ENCODE measurements at regions of chr2 and their contacts with region 1.

Region 1: DNA sequence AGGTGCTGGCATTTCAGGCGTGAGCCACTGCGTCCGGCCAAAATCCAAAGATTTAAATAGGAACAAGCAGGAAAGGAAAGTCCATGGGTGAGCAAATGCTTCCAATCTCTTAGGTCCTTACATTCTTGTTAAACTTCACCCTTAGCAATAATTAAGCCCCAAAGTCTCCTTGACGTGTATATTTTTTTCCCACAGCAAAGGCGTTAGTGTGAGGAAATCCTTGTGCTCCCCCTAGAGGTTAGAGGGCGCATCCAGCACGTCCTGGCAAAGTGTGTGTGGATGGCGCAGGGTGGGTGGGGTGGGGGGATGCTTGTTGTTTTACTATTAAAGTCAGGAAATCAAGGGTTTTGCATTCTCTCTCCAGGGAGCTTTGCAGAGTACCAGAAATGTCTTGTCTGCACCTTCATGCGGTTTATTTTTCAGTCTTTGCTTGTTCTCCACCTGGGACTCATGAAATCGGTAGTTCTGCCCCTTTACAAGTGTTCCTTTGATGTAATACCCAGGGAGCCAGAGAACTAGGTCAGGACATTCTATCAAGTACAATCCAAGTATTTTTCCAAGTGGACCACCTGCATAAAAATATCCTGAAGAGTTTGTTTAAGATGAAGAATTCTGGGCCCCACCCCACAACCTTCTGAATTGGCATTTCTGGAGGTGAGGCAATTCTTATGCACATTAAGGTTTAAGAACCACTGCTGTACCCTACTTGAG is 22.2 kb upstream of the ITSN2 start:
- DNase-seq: peak; percentile 63
- H3K4me3 Mint-ChIP-seq: no peak overlapping the region
- H3K27ac Mint-ChIP-seq: no peak overlapping the region
- H3K4me1 Mint-ChIP-seq: no peaks in the 10 kb centered on the region
- H3K27me3 Mint-ChIP-seq: no peaks in the 10 kb centered on the region
- CTCF ChIP-seq: peak; percentile 73

Region 2: DNA sequence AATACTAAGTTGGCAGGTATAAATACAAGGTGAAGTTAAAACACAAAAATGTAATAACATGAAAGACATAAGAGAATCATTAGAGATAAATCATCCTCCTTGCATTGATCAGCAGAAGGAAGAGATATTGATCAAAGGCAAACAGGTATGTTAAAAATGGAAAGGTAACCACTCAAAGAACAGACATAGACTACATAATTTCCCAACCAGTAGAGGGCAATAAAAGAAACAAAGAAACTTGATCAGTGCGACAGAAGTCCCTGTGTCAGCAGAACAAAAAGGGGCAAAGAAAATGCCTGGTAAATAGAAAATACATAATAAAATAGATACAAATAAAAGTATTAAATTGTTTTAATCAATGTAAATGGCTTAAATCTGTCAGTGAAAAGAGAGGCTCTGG is 154.0 kb before region 1 on chr2:
- CTCF ChIA-PET with region 1: no interaction called
- intact Hi-C with region 1: loop called (anchors 1 kb)
- DNase-seq: no peak
- H3K4me3 Mint-ChIP-seq: no peak overlapping the region
- H3K27ac Mint-ChIP-seq: no peak overlapping the region
- H3K4me1 Mint-ChIP-seq: no peaks in the 10 kb centered on the region
- H3K27me3 Mint-ChIP-seq: no peaks in the 10 kb centered on the region
- CTCF ChIP-seq: peak; percentile 34

Region 3: DNA sequence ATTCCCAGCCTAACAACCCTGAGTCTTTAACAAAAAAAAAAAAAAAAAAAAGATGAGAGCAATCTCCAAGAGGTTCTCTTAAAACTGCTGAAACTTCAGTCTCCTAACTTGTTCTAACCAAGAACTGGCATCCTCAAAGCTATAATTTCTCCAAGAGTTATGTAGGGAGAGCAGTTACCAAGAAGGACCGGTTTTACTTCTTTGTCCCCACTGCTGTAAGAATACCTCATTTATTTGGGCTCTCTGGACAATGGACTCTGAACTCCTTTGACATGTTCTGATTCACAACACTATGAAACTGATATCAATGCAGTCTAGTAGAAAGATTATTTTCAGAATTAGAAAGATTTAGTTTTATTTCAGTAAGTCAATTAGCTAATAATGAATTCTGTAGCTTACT is 1375.4 kb after region 1 on chr2:
- CTCF ChIA-PET with region 1: interaction called, 10 read pairs
- intact Hi-C with region 1: no loop called
- DNase-seq: peak; percentile 10
- H3K4me3 Mint-ChIP-seq: no peak overlapping the region
- H3K27ac Mint-ChIP-seq: peak overlapping the region; percentile 63
- H3K4me1 Mint-ChIP-seq: peaks cover 13% of the 10 kb centered on the region
- H3K27me3 Mint-ChIP-seq: no peaks in the 10 kb centered on the region
- CTCF ChIP-seq: no peak

Measured in Calu3 (cell line).